ENCODE measurements at regions of chr5 and their contacts with region 1.

Region 1: GRCh38 chr5:6765612-6766525 is 52.6 kb downstream of the TENT4A start:
- DNase-seq: peak; percentile 68 to 86 (median 73)
- ATAC-seq: peak; percentile 53 to 82 (median 71)
- H3K4me3 ChIP-seq: peak overlapping the region in 2 of 12 donors; percentile 15 to 28
- H3K27ac ChIP-seq: peak overlapping the region in 6 of 12 donors; percentile 36 to 82 (median 48)
- H3K4me1 ChIP-seq: peaks cover 0 to 31% (median 9%) of the 10 kb centered on the region in 12 donors
- H3K27me3 ChIP-seq: no peaks in the 10 kb centered on the region
- CTCF ChIP-seq: peak; percentile 60 to 85 (median 74)
- POLR2A ChIP-seq: no peak

Region 2: GRCh38 chr5:6732634-6733410 is 33.0 kb before region 1 on chr5:
- intact Hi-C with region 1: no loop called
- DNase-seq: peak; percentile 42 to 78 (median 58)
- ATAC-seq: peak; percentile 32 to 72 (median 66)
- H3K4me3 ChIP-seq: peak overlapping the region in 9 of 12 donors; percentile 15 to 33 (median 19)
- H3K27ac ChIP-seq: peak overlapping the region; percentile 43 to 91 (median 70)
- H3K4me1 ChIP-seq: peaks cover 18 to 87% (median 68%) of the 10 kb centered on the region in 12 donors
- H3K27me3 ChIP-seq: no peaks in the 10 kb centered on the region
- CTCF ChIP-seq: no peak
- POLR2A ChIP-seq: no peak

Region 3: DNA sequence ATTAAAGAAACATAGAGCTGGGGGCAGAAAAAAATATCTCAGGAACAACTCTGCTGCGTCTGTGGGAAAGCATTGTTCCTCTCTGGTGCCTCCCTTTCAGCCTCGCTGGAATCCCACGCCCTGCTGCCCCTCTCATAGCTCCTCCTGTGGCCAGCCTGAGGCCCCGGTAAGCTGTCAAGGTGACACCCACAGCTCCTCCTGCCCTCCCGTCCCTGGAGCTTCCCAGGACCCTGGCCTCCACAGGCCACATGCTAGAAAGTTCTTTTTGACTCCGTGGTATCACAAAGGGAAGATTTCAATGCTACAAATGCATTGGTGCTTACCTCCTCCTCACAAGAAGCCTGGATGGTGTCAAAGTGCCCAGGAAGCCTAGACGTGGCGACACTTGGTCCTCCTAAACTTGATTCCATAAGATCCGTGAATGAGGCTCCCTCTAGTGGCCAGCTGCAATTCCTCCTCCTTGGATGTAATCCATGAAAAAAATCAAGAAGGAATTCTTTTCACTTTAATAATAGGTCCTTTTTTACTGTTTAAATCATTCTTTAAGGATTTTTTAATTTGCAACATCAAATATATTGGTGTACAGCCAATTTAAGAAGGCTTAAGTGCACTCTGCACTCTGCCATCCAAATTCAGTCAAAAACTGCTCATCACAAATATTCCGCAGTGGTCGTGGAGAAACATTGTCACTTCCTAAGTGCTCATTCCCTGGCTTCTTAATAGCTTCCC is 980.2 kb after region 1 on chr5:
- intact Hi-C with region 1: loop called in 8 of 10 experiments (anchors 2 to 10 kb)
- DNase-seq: peak; percentile 36 to 64 (median 53)
- ATAC-seq: peak in 1 of 4 donors; percentile 51
- H3K4me3 ChIP-seq: no peak overlapping the region
- H3K27ac ChIP-seq: no peak overlapping the region
- H3K4me1 ChIP-seq: no peaks in the 10 kb centered on the region
- H3K27me3 ChIP-seq: peaks cover 0 to 2% (median 0%) of the 10 kb centered on the region in 9 donors
- CTCF ChIP-seq: peak; percentile 67 to 86 (median 82)
- POLR2A ChIP-seq: no peak

Region 4: GRCh38 chr5:7815892-7816534 is 1050.1 kb after region 1 on chr5:
- intact Hi-C with region 1: loop called in 3 of 10 experiments (anchors 5 to 10 kb)
- DNase-seq: peak; percentile 73 to 88 (median 79)
- ATAC-seq: peak; percentile 91 to 99 (median 95)
- H3K4me3 ChIP-seq: no peak overlapping the region
- H3K27ac ChIP-seq: no peak overlapping the region
- H3K4me1 ChIP-seq: peaks cover 0 to 8% (median 0%) of the 10 kb centered on the region in 12 donors
- H3K27me3 ChIP-seq: peaks cover 0 to 26% (median 0%) of the 10 kb centered on the region in 9 donors
- CTCF ChIP-seq: peak; percentile 64 to 87 (median 78)
- POLR2A ChIP-seq: no peak

Region 5: GRCh38 chr5:7850395-7851239 is 1084.7 kb after region 1 on chr5 and contains the start of gene CFAP90:
- intact Hi-C with region 1: loop called in 3 of 10 experiments (anchors 5 to 10 kb)
- DNase-seq: peak; percentile 29 to 71 (median 42)
- ATAC-seq: peak in 3 of 4 donors; percentile 68 to 76 (median 72)
- H3K4me3 ChIP-seq: peak within 1 kb of the TSS; percentile 37 to 60 (median 52)
- H3K27ac ChIP-seq: no peak within 1 kb of the TSS
- H3K4me1 ChIP-seq: peaks cover 0 to 20% (median 9%) of the 10 kb centered on the region in 12 donors
- H3K27me3 ChIP-seq: peaks cover 0 to 40% (median 28%) of the 10 kb centered on the region in 9 donors
- CTCF ChIP-seq: peak in 5 of 12 donors; percentile 11 to 48 (median 32)
- POLR2A ChIP-seq: no peak
- total RNA-seq, gene CFAP90: not detected